Transverse colon (tissue), 4 donors: ENCODE measurements at regions of chr2 and their contacts with region 1.

Region 1: GRCh38 chr2:181466661-181467576 is 9.7 kb downstream of the ITGA4 start:
- DNase-seq: peak; percentile 80
- H3K4me3 ChIP-seq: no peak overlapping the region
- H3K27ac ChIP-seq: no peak overlapping the region
- H3K4me1 ChIP-seq: peaks cover 0 to 13% (median 0%) of the 10 kb centered on the region in 4 donors
- H3K27me3 ChIP-seq: no peaks in the 10 kb centered on the region
- CTCF ChIP-seq: peak; percentile 68 to 83 (median 76)
- EP300 ChIP-seq: no peak
- POLR2A ChIP-seq: no peak

Region 2: DNA sequence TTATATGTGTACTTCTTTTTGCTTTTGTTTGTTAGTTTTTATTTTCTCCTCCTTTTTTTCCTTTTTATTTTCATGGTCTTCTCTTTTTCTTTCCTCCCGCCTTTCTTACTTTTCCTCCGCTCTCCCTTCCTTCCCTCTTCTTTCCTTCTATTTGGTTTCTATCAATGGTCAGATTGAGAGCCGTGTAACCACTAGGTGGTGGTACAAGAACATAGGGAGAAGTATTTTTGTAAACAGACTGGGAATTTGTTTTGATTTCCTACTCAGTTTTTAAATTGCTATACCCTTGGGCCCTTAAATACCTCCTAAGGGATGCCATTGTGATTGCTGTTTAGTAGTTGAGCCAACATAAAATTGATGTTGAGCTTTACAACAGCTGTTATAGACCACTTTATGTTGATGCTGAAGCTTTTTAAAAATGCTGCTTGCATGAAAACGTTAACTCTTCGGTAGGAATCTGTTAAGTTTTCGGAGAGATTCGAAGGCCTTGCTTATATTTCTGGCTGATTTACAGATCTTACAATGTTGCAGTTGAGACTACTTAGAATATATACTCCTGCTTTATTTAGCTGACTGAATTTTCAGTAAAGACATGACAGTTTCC is 362.3 kb before region 1 on chr2:
- in situ Hi-C with region 1: loop called in 3 of 4 experiments (anchors 10 to 25 kb)
- intact Hi-C with region 1: no loop called
- DNase-seq: peak; percentile 11
- H3K4me3 ChIP-seq: no peak overlapping the region
- H3K27ac ChIP-seq: no peak overlapping the region
- H3K4me1 ChIP-seq: peaks cover 0 to 5% (median 0%) of the 10 kb centered on the region in 4 donors
- H3K27me3 ChIP-seq: no peaks in the 10 kb centered on the region
- CTCF ChIP-seq: peak; percentile 51 to 61 (median 55)
- EP300 ChIP-seq: no peak
- POLR2A ChIP-seq: no peak

Region 3: DNA sequence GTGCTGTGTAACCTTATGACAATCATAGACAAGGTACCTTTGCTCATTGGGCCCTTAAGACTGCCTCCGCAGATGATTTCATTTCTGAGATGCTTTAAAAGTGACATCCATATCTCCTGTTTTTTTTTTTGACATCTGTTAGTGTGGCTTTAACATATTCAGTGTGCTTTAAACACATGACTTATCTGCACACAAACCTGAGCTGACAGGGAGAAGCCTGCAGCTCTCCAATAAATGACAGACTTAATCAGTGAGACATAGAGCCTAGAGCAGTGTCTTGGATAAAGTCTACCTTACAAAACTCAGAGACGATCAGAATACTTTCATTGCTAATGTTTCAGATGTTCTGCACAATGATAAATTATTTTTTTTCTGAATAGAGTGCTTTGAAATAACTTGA is 355.9 kb before region 1 on chr2:
- in situ Hi-C with region 1: loop called (anchors 5 to 25 kb)
- intact Hi-C with region 1: no loop called
- DNase-seq: no peak
- H3K4me3 ChIP-seq: no peak overlapping the region
- H3K27ac ChIP-seq: no peak overlapping the region
- H3K4me1 ChIP-seq: peaks cover 0 to 5% (median 0%) of the 10 kb centered on the region in 4 donors
- H3K27me3 ChIP-seq: no peaks in the 10 kb centered on the region
- CTCF ChIP-seq: no peak
- EP300 ChIP-seq: no peak
- POLR2A ChIP-seq: no peak

Region 4: GRCh38 chr2:181305301-181306123 is 161.4 kb before region 1 on chr2:
- in situ Hi-C with region 1: loop called in 1 of 4 experiments (anchors 10 kb)
- intact Hi-C with region 1: no loop called
- DNase-seq: peak; percentile 51
- H3K4me3 ChIP-seq: no peak overlapping the region
- H3K27ac ChIP-seq: peak overlapping the region; percentile 49 to 63 (median 58)
- H3K4me1 ChIP-seq: peaks cover 0 to 13% (median 2%) of the 10 kb centered on the region in 4 donors
- H3K27me3 ChIP-seq: no peaks in the 10 kb centered on the region
- CTCF ChIP-seq: no peak
- EP300 ChIP-seq: no peak
- POLR2A ChIP-seq: peak; percentile 18

Region 5: DNA sequence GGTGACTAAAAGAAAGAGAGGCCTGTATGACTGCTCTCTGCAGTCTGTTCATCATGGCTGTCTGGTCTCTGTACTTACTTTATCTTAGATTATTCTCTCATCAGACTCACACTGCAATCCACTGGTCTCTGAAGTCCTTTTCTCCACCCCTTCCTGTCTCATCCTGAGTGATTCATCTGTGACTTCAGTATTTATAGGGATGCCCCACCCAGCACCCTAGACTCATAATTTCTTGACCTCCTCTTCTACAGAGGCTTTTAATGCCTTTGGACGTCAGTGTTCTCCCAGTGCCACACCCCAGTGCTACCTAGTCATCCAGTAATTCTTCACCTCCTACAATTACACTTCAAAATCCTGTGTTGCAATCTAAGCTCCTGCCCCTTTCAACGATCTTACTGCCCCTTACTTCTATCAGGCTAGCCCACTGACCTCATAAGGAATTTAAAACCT is 409.7 kb after region 1 on chr2:
- in situ Hi-C with region 1: no loop called
- intact Hi-C with region 1: no loop called
- DNase-seq: peak; percentile 62
- H3K4me3 ChIP-seq: no peak overlapping the region
- H3K27ac ChIP-seq: peak overlapping the region; percentile 39 to 68 (median 62)
- H3K4me1 ChIP-seq: peaks cover 0 to 24% (median 8%) of the 10 kb centered on the region in 4 donors
- H3K27me3 ChIP-seq: no peaks in the 10 kb centered on the region
- CTCF ChIP-seq: no peak
- EP300 ChIP-seq: peak; percentile 51
- POLR2A ChIP-seq: peak; percentile 19